ENCODE measurements at regions of chr1 and their contacts with region 1.

Region 1: DNA sequence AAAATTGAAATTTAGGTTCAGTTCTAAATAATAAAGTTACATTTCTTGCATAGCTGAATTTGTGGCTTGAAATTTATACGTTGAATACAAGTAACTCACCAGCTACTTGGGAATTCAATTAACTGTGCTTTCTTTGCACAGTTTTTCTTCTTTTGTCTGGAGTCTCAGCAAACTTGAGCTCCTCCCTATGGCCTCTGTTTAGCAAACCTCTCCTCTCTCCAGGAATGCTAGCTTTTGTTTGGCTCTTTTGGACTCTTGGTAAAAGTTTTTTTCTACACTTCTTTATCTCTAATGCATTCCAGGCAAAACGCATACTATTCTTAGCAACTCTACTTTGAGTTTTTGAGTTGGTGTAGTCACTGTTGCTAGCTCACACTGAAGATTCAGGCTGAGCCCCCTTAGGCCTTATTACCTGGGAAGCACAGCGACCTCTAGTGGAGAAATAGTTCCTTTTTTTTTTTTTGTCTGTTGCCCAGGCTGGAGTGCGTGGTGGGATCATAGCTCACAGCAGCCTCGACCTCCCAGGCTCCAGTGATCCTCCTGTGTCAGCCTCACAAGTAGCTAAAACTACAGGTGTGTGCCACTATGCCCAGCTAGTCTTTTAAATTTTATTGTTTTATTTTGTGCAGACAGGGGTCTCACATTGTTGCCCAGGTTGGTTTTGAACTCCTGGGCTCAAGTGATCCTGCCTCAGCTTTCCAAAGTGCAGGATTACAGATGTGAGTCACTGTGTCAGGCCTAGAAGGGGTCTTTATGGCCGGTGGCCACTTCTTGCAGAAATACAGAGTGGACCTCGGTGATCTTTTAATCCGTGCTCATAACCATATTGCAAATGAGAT is 61.7 kb downstream of the CASQ2 start:
- DNase-seq: no peak
- H3K4me3 ChIP-seq: no peak overlapping the region
- H3K27me3 ChIP-seq: peaks cover 11% of the 10 kb centered on the region
- CTCF ChIP-seq: peak; percentile 74

Region 2: DNA sequence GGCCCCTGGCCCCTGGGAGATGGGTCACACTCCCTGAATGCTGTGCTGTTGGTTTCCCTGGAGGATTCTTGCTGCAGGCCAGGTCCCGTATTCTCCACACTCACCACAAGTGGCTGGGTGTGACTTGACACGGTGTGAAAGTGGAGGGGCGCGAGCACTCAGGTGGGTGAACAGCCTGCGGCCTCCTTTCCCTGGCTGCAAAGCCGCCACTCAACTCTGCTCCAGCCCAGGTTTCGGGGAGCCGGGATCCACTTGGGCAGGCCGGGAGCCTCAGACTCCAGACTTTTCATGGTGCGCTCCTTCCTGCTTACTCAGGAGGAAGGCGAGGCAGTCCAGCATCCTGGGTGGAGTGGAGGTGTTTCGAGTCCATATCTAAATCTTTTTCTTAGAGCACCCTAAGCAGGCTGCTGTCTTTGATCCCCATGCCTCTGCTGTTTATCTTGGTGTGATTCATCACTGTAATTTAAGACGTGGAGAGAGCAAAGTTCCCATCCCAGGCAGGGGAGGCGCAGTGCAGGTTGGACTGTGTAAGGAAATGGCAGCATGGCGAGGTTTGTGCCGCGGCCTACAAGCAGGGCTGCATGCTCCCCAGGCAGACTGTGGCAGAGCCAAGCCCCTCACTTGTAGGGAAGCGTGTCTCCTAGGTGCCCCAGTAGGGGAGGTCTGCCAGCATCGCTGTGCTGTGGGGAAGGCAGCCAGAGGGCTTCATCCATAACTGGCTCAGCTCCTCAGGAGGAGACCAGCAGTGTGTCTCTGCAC is 35.5 kb before region 1 on chr1:
- CTCF ChIA-PET with region 1: interaction called, 14 read pairs
- POLR2A ChIA-PET with region 1: no interaction called
- DNase-seq: no peak
- H3K4me3 ChIP-seq: no peak overlapping the region
- H3K27me3 ChIP-seq: no peaks in the 10 kb centered on the region
- CTCF ChIP-seq: no peak

Region 3: GRCh38 chr1:115694805-115695204 is 12.0 kb before region 1 on chr1:
- CTCF ChIA-PET with region 1: interaction called, 32 read pairs
- POLR2A ChIA-PET with region 1: no interaction called
- DNase-seq: no peak
- H3K4me3 ChIP-seq: no peak overlapping the region
- H3K27me3 ChIP-seq: no peaks in the 10 kb centered on the region
- CTCF ChIP-seq: no peak

Region 4: DNA sequence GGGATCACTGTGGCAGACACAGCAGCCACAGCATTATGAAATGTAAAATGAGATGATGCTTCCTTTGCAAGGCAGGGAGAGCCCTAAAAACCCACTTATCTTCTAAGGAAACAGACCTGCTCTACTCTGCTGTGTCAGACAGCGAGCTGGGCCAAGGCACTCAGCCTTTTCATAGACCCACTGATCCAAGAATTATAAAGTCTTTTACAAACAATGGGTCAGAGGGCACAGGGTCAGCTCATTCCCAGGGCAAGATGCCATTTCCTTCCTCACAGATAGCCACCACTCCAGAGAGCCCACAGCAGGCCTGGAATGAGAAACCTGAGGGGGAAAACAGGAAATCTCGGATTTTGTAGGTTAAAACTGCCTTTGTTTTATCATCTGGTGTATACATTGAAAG is 18.8 kb after region 1 on chr1:
- CTCF ChIA-PET with region 1: interaction called, 11 read pairs
- POLR2A ChIA-PET with region 1: no interaction called
- DNase-seq: no peak
- H3K4me3 ChIP-seq: no peak overlapping the region
- H3K27me3 ChIP-seq: no peaks in the 10 kb centered on the region
- CTCF ChIP-seq: no peak

Region 5: GRCh38 chr1:115811140-115811828 is 104.5 kb after region 1 on chr1:
- CTCF ChIA-PET with region 1: no interaction called
- POLR2A ChIA-PET with region 1: no interaction called
- DNase-seq: no peak
- H3K4me3 ChIP-seq: no peak overlapping the region
- H3K27me3 ChIP-seq: peaks cover 4% of the 10 kb centered on the region
- CTCF ChIP-seq: no peak